Activated CD4-positive, alpha-beta memory T cell treated with anti-CD3 and anti-CD28 coated beads, Interleukin-2, amount 10 ng/mL, durations not matched to agents 7 days and 5 days (primary cell): ENCODE measurements at regions of chr3 and their contacts with region 1.

Region 1: DNA sequence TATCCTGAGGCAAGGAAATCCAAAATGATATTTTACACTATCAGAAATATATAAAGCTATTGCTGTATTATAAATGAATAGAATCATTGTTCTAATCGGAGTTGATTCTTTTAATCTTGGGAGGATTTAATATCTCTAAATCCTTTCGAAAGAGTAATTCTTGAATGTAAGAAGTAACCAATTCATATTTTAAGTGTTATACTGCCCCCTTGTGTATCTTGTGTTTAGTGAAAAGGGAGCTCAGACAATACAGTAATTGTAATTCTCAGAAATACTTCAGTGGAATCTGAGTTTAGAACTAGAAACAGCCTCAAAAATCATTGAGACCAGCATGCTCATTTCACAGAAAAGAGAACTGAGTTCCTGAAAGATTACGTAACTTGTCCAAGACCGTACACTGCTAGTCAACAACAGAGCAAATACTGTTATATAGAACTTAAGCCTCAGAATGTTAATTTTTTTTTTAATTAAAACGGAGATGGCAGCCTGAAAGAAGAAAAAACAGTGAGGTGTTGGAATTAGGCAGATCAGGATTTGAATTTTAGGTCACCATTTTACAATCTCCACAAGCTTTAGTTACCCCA is 42.9 kb downstream of the PLCH1 start:
- DNase-seq: no peak
- H3K4me3 Mint-ChIP-seq: no peak overlapping the region
- H3K27ac Mint-ChIP-seq: no peak overlapping the region
- H3K4me1 Mint-ChIP-seq: no peaks in the 10 kb centered on the region
- H3K27me3 Mint-ChIP-seq: peaks cover 10% of the 10 kb centered on the region

Region 2: GRCh38 chr3:155352900-155353490 is 349.0 kb before region 1 on chr3:
- CTCF ChIA-PET with region 1: interaction called, 33 read pairs
- POLR2A ChIA-PET with region 1: no interaction called
- DNase-seq: no peak
- H3K4me3 Mint-ChIP-seq: no peak overlapping the region
- H3K27ac Mint-ChIP-seq: no peak overlapping the region
- H3K4me1 Mint-ChIP-seq: no peaks in the 10 kb centered on the region
- H3K27me3 Mint-ChIP-seq: no peaks in the 10 kb centered on the region

Region 3: GRCh38 chr3:155712008-155712407 is 10.0 kb after region 1 on chr3:
- CTCF ChIA-PET with region 1: interaction called, 11 read pairs
- POLR2A ChIA-PET with region 1: no interaction called
- DNase-seq: no peak
- H3K4me3 Mint-ChIP-seq: no peak overlapping the region
- H3K27ac Mint-ChIP-seq: no peak overlapping the region
- H3K4me1 Mint-ChIP-seq: no peaks in the 10 kb centered on the region
- H3K27me3 Mint-ChIP-seq: no peaks in the 10 kb centered on the region